CD8-positive, alpha-beta T cell (primary cell): ENCODE measurements at regions of chr1 and their contacts with region 1.

Region 1: GRCh38 chr1:154760469-154760933 is 109.6 kb downstream of the KCNN3 start:
- DNase-seq: peak; percentile 67 to 94 (median 84)
- ATAC-seq: peak; percentile 91
- H3K4me3 ChIP-seq: peak overlapping the region; percentile 30 to 35
- H3K4me3 Mint-ChIP-seq: peak overlapping the region; percentile 67
- H3K27ac ChIP-seq: no peak overlapping the region
- H3K27ac Mint-ChIP-seq: no peak overlapping the region
- H3K4me1 ChIP-seq: peaks cover 13% of the 10 kb centered on the region
- H3K4me1 Mint-ChIP-seq: peaks cover 25% of the 10 kb centered on the region
- H3K27me3 ChIP-seq: no peaks in the 10 kb centered on the region
- H3K27me3 Mint-ChIP-seq: peaks cover 2% of the 10 kb centered on the region
- CTCF ChIP-seq: peak; percentile 89

Region 2: GRCh38 chr1:153293851-153294250 is 1466.7 kb before region 1 on chr1:
- CTCF ChIA-PET with region 1: no interaction called
- POLR2A ChIA-PET with region 1: no interaction called
- intact Hi-C with region 1: no loop called
- DNase-seq: no peak
- ATAC-seq: no peak
- H3K4me3 ChIP-seq: no peak overlapping the region
- H3K4me3 Mint-ChIP-seq: no peak overlapping the region
- H3K27ac ChIP-seq: no peak overlapping the region
- H3K27ac Mint-ChIP-seq: no peak overlapping the region
- H3K4me1 ChIP-seq: peaks cover 10% of the 10 kb centered on the region
- H3K4me1 Mint-ChIP-seq: peaks cover 20% of the 10 kb centered on the region
- H3K27me3 ChIP-seq: peaks cover 0 to 4% of the 10 kb centered on the region in 2 experiments
- H3K27me3 Mint-ChIP-seq: peaks cover 23% of the 10 kb centered on the region
- CTCF ChIP-seq: no peak

Region 3: GRCh38 chr1:154479764-154480421 is 280.6 kb before region 1 on chr1:
- CTCF ChIA-PET with region 1: interaction called, 19 read pairs
- POLR2A ChIA-PET with region 1: no interaction called
- intact Hi-C with region 1: loop called (anchors 2 kb)
- DNase-seq: peak in 8 of 9 experiments; percentile 12 to 80 (median 58)
- ATAC-seq: peak; percentile 91
- H3K4me3 ChIP-seq: no peak overlapping the region
- H3K4me3 Mint-ChIP-seq: no peak overlapping the region
- H3K27ac ChIP-seq: no peak overlapping the region
- H3K27ac Mint-ChIP-seq: no peak overlapping the region
- H3K4me1 ChIP-seq: peaks cover 3% of the 10 kb centered on the region
- H3K4me1 Mint-ChIP-seq: peaks cover 9% of the 10 kb centered on the region
- H3K27me3 ChIP-seq: no peaks in the 10 kb centered on the region
- H3K27me3 Mint-ChIP-seq: peaks cover 3% of the 10 kb centered on the region
- CTCF ChIP-seq: peak; percentile 98

Region 4: GRCh38 chr1:154720328-154721297 is 39.9 kb before region 1 on chr1:
- CTCF ChIA-PET with region 1: no interaction called
- POLR2A ChIA-PET with region 1: no interaction called
- intact Hi-C with region 1: no loop called
- DNase-seq: no peak
- ATAC-seq: no peak
- H3K4me3 ChIP-seq: no peak overlapping the region
- H3K4me3 Mint-ChIP-seq: no peak overlapping the region
- H3K27ac ChIP-seq: no peak overlapping the region
- H3K27ac Mint-ChIP-seq: peak overlapping the region; percentile 30
- H3K4me1 ChIP-seq: peaks cover 8% of the 10 kb centered on the region
- H3K4me1 Mint-ChIP-seq: peaks cover 23% of the 10 kb centered on the region
- H3K27me3 ChIP-seq: no peaks in the 10 kb centered on the region
- H3K27me3 Mint-ChIP-seq: no peaks in the 10 kb centered on the region
- CTCF ChIP-seq: no peak

Region 5: DNA sequence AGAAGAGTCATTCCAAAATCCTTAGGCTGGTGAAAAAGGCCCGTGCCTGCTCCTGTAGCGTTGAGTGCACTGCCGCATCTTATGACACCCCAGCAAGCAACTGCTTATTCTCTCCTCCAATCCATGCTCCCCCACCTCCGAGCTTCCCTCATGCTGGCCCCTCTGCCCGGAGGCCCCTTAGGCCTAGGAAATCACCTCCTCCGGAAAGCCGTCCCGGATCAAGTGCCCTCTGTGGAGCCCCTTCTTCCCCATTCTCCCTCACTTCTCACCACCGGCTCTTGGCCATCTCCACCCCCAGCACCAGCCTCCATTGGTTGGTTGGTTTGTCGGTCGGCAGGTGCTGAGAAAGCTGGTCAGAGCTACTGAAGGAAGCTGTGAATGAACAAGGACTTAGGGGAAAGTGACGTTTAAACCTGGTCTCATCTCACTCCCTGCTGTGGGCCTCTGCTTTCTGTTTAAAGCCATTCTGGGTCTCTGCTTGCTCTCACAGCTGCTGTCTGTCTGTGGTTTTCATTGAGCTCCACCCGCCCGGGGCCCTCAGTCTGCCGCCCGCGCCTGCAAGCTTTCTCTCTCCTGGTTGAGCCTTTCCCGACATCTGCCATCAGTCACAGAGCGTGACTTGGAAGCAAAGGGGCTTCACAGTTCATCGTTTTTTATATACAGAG is 12.6 kb before region 1 on chr1:
- CTCF ChIA-PET with region 1: interaction called, 15 read pairs
- POLR2A ChIA-PET with region 1: interaction called, 3 read pairs
- intact Hi-C with region 1: loop called in 1 of 2 experiments (anchors 1 kb)
- DNase-seq: peak; percentile 19 to 74 (median 59)
- ATAC-seq: peak; percentile 89
- H3K4me3 ChIP-seq: peak overlapping the region in 1 of 2 experiments; percentile 10
- H3K4me3 Mint-ChIP-seq: peak overlapping the region; percentile 76
- H3K27ac ChIP-seq: peak overlapping the region in 1 of 2 experiments; percentile 70
- H3K27ac Mint-ChIP-seq: peak overlapping the region; percentile 91
- H3K4me1 ChIP-seq: peaks cover 49% of the 10 kb centered on the region
- H3K4me1 Mint-ChIP-seq: peaks cover 45% of the 10 kb centered on the region
- H3K27me3 ChIP-seq: peaks cover 0 to 2% of the 10 kb centered on the region in 2 experiments
- H3K27me3 Mint-ChIP-seq: peaks cover 2% of the 10 kb centered on the region
- CTCF ChIP-seq: no peak

Region 6: GRCh38 chr1:154791292-154792166 is 31.0 kb after region 1 on chr1:
- CTCF ChIA-PET with region 1: interaction called, 39 read pairs
- POLR2A ChIA-PET with region 1: interaction called, 6 read pairs
- intact Hi-C with region 1: loop called (anchors 1 kb)
- DNase-seq: peak; percentile 69 to 97 (median 85)
- ATAC-seq: peak; percentile 93
- H3K4me3 ChIP-seq: peak overlapping the region in 1 of 2 experiments; percentile 5
- H3K4me3 Mint-ChIP-seq: peak overlapping the region; percentile 73
- H3K27ac ChIP-seq: peak overlapping the region; percentile 10 to 25
- H3K27ac Mint-ChIP-seq: peak overlapping the region; percentile 90
- H3K4me1 ChIP-seq: peaks cover 27% of the 10 kb centered on the region
- H3K4me1 Mint-ChIP-seq: peaks cover 39% of the 10 kb centered on the region
- H3K27me3 ChIP-seq: no peaks in the 10 kb centered on the region
- H3K27me3 Mint-ChIP-seq: no peaks in the 10 kb centered on the region
- CTCF ChIP-seq: peak; percentile 27

Region 7: GRCh38 chr1:154878371-154879022 is 118.0 kb after region 1 on chr1:
- CTCF ChIA-PET with region 1: interaction called, 12 read pairs
- POLR2A ChIA-PET with region 1: no interaction called
- intact Hi-C with region 1: no loop called
- DNase-seq: peak; percentile 49 to 84 (median 74)
- ATAC-seq: peak; percentile 97
- H3K4me3 ChIP-seq: no peak overlapping the region
- H3K4me3 Mint-ChIP-seq: no peak overlapping the region
- H3K27ac ChIP-seq: no peak overlapping the region
- H3K27ac Mint-ChIP-seq: no peak overlapping the region
- H3K4me1 ChIP-seq: no peaks in the 10 kb centered on the region
- H3K4me1 Mint-ChIP-seq: no peaks in the 10 kb centered on the region
- H3K27me3 ChIP-seq: no peaks in the 10 kb centered on the region
- H3K27me3 Mint-ChIP-seq: no peaks in the 10 kb centered on the region
- CTCF ChIP-seq: peak; percentile 65